Activated CD4-positive, alpha-beta memory T cell treated with anti-CD3 and anti-CD28 coated beads, Interleukin-2, amount 10 ng/mL, durations not matched to agents 7 days and 5 days (primary cell): ENCODE measurements at regions of chr21 and their contacts with region 1.

Region 1: DNA sequence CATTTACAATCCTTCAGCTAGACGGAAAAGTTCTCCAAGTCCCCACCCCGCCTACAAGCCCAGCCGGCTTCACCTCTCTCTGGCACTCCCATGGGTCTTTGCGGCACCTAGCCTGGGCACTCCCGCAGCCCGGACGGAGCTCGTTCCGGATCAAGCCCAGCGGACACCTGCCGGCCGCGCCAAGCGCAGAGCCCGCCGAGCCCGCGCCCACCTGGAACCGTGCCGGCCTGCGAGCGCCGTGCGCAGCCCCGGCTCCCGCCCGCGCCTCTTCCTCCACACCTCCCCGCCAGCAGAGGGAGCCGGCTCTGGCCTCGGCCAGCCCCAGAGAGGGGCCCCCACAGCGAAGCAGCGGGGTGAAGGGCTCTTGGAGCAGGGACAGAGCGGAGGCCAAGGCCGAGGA is 50.0 kb upstream of the KRTAP19-8 start:
- DNase-seq: no peak
- H3K4me3 Mint-ChIP-seq: no peak overlapping the region
- H3K27ac Mint-ChIP-seq: no peak overlapping the region
- H3K4me1 Mint-ChIP-seq: peaks cover 7% of the 10 kb centered on the region
- H3K27me3 Mint-ChIP-seq: peaks cover 20% of the 10 kb centered on the region

Region 2: GRCh38 chr21:30831194-30831765 is 257.0 kb before region 1 on chr21:
- CTCF ChIA-PET with region 1: interaction called, 19 read pairs
- POLR2A ChIA-PET with region 1: no interaction called
- DNase-seq: peak; percentile 44
- H3K4me3 Mint-ChIP-seq: no peak overlapping the region
- H3K27ac Mint-ChIP-seq: no peak overlapping the region
- H3K4me1 Mint-ChIP-seq: no peaks in the 10 kb centered on the region
- H3K27me3 Mint-ChIP-seq: peaks cover 6% of the 10 kb centered on the region